ENCODE measurements at regions of chr2 and their contacts with region 1.

Region 1: GRCh38 chr2:216114714-216115557 is 5.8 kb downstream of the XRCC5 start:
- DNase-seq: peak; percentile 85 to 99 (median 95)

Region 2: DNA sequence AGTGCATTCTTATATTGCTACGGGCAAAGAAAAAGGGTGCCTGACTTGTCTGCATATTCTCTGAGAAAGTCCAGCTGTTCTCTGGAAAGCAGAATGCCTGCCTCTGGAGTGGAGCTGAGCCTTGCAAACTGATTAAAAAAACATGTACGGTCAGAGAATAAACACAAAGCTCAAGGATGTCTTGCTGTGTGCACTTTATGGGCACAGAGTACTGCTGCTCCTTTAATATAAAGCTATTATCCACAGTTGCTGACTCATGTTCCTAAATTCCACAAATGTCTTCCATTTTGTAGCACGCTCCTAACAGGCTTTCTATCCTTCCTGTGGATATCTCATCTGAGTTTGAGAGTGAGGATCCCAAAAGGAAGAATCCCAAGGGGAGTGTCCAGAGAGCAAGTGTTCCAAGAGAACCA is 330.6 kb before region 1 on chr2:
- intact Hi-C with region 1: no loop called
- DNase-seq: no peak

Region 3: GRCh38 chr2:216412022-216412999 is 297.4 kb after region 1 on chr2 and contains the start of gene SMARCAL1:
- intact Hi-C with region 1: loop called (anchors 10 kb)
- DNase-seq: peak; percentile 98 to 100 (median 100)

Measured in head of caudate nucleus (tissue), 42 donors.